Activated T-helper 1 cell treated with anti-CD3 and anti-CD28 coated beads, Interleukin-12 subunit alpha, Interleukin-12 subunit beta, Interleukin-2, Interleukin-4 antibody, amounts not matched to agents 30 ng/mL and 10 ng/mL and 1 ng/mL, durations not matched to agents 14 hours and 24 hours and 36 hours (primary cell): ENCODE measurements at regions of chr3 and their contacts with region 1.

Region 1: GRCh38 chr3:149812606-149813366 is at the start of gene RNF13:
- DNase-seq: peak; percentile 90
- H3K4me3 Mint-ChIP-seq: peak within 1 kb of the TSS; percentile 92
- H3K27ac Mint-ChIP-seq: peak within 1 kb of the TSS; percentile 100
- H3K4me1 Mint-ChIP-seq: peaks cover 56% of the 10 kb centered on the region
- H3K27me3 Mint-ChIP-seq: peaks cover 10% of the 10 kb centered on the region
- total RNA-seq, gene RNF13: 41.1 and 41.6 TPM in 2 replicates

Region 2: GRCh38 chr3:149086232-149086988 is 726.4 kb before region 1 on chr3 and contains the start of gene HLTF:
- intact Hi-C with region 1: loop called (anchors 2 kb)
- DNase-seq: peak; percentile 87
- H3K4me3 Mint-ChIP-seq: peak within 1 kb of the TSS; percentile 90
- H3K27ac Mint-ChIP-seq: peak within 1 kb of the TSS; percentile 87
- H3K4me1 Mint-ChIP-seq: peaks cover 27% of the 10 kb centered on the region
- H3K27me3 Mint-ChIP-seq: no peaks in the 10 kb centered on the region
- total RNA-seq, gene HLTF: 19.7 and 22.6 TPM in 2 replicates

Region 3: GRCh38 chr3:149494022-149494758 is 318.6 kb before region 1 on chr3:
- intact Hi-C with region 1: loop called (anchors 1 kb)
- DNase-seq: peak; percentile 19
- H3K4me3 Mint-ChIP-seq: no peak overlapping the region
- H3K27ac Mint-ChIP-seq: no peak overlapping the region
- H3K4me1 Mint-ChIP-seq: no peaks in the 10 kb centered on the region
- H3K27me3 Mint-ChIP-seq: peaks cover 22% of the 10 kb centered on the region

Region 4: GRCh38 chr3:149657926-149658733 is 154.7 kb before region 1 on chr3 and contains the start of gene WWTR1:
- intact Hi-C with region 1: loop called (anchors 2 kb)
- DNase-seq: peak; percentile 34
- H3K4me3 Mint-ChIP-seq: peak within 1 kb of the TSS; percentile 84
- H3K27ac Mint-ChIP-seq: peak within 1 kb of the TSS; percentile 45
- H3K4me1 Mint-ChIP-seq: peaks cover 19% of the 10 kb centered on the region
- H3K27me3 Mint-ChIP-seq: peaks cover 50% of the 10 kb centered on the region
- total RNA-seq, gene WWTR1: 0.57 and 0.81 TPM in 2 replicates

Region 5: GRCh38 chr3:149969940-149970715 is 157.3 kb after region 1 on chr3:
- intact Hi-C with region 1: loop called (anchors 2 kb)
- DNase-seq: peak; percentile 56
- H3K4me3 Mint-ChIP-seq: peak overlapping the region; percentile 80
- H3K27ac Mint-ChIP-seq: no peak overlapping the region
- H3K4me1 Mint-ChIP-seq: peaks cover 12% of the 10 kb centered on the region
- H3K27me3 Mint-ChIP-seq: peaks cover 54% of the 10 kb centered on the region

Region 6: DNA sequence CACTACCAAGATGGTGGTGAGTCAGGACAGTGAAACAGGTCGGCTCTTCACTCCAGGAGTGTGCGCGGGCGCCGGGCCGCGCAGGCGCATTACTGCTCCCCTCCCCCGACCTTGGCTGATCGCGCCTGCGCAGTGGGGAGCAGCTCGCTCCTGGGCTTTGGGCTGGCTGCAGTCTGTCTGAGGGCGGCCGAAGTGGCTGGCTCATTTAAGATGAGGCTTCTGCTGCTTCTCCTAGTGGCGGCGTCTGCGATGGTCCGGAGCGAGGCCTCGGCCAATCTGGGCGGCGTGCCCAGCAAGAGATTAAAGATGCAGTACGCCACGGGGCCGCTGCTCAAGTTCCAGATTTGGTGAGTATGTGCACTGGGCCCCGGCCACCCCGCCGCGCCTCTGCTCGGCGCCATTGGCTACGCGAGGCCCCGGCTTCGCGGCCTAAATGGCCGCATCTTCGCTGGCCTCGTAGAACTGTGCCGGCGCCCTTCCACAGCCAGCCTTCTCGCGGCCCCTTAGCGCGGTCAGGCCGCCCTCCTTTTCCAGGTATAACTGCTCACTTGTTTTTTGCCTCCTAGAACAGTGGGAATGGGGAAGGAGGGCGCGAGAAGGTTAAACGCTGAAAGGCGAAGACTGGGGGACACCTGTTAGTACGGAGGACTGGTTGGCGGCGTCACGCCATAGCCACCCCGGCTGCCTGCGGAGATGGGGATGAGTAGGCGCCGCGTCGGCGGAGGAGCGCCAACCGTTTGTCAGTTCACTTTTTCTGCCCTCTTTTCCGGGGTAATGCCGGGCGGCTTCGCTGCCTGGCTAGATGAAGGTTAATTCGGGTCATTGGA is 790.6 kb after region 1 on chr3 and contains the start of gene SELENOT:
- intact Hi-C with region 1: loop called (anchors 10 kb)
- DNase-seq: peak; percentile 96
- H3K4me3 Mint-ChIP-seq: peak within 1 kb of the TSS; percentile 99
- H3K27ac Mint-ChIP-seq: peak within 1 kb of the TSS; percentile 99
- H3K4me1 Mint-ChIP-seq: peaks cover 80% of the 10 kb centered on the region
- H3K27me3 Mint-ChIP-seq: peaks cover 2% of the 10 kb centered on the region
- total RNA-seq, gene SELENOT: 139 and 140 TPM in 2 replicates